SK-N-SH (cell line): ENCODE measurements at regions of chr2 and their contacts with region 1.

Region 1: DNA sequence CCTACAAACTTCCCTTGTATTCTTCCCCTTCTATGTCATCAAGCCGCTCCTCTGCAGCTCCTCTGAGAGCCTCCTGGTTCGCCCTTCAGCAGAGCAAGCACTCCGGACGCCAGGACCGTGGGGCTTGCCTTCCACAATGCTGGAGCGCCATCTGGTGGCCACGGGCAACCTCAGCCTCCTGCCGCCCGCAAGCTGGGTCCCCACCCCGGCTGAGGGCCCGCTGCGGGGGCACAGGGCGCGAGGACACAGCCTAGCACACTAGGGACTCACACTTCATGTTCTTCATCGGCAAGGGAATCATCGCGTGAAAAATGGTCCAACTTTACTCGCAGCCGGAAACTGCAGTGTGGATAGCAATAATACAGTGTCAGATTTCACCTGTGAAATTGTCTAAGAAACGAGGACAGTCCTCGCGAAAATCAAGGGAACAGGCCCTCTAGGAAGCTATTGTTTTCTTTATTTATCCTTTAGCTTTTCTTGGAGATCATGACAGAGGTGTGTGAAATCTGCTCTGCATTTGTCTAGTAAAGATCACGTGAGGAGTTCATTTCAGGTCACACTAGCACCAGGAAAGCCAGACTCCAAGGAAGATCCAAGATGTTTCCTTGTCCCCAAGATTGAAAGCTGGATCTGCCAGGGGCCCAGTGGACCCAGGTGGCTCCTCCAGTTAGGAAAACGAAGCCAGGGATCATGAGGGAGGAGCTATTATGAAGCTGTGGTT is 5.8 kb downstream of the PRLH start:
- DNase-seq: peak; percentile 96
- H3K4me3 ChIP-seq: peak overlapping the region in 1 of 2 experiments; percentile 17; a peak in 1 of 4 replicates
- H3K27ac ChIP-seq: peak overlapping the region in 1 of 2 experiments; percentile 21; a peak in 2 of 4 replicates
- H3K4me1 ChIP-seq: peaks cover 6 to 16% of the 10 kb centered on the region in 2 experiments; a peak in 3 of 4 replicates
- H3K27me3 ChIP-seq: no peaks in the 10 kb centered on the region
- CTCF ChIP-seq: peak; percentile 98
- EP300 ChIP-seq: no peak
- RAD21 ChIP-seq: peak; percentile 98

Region 2: DNA sequence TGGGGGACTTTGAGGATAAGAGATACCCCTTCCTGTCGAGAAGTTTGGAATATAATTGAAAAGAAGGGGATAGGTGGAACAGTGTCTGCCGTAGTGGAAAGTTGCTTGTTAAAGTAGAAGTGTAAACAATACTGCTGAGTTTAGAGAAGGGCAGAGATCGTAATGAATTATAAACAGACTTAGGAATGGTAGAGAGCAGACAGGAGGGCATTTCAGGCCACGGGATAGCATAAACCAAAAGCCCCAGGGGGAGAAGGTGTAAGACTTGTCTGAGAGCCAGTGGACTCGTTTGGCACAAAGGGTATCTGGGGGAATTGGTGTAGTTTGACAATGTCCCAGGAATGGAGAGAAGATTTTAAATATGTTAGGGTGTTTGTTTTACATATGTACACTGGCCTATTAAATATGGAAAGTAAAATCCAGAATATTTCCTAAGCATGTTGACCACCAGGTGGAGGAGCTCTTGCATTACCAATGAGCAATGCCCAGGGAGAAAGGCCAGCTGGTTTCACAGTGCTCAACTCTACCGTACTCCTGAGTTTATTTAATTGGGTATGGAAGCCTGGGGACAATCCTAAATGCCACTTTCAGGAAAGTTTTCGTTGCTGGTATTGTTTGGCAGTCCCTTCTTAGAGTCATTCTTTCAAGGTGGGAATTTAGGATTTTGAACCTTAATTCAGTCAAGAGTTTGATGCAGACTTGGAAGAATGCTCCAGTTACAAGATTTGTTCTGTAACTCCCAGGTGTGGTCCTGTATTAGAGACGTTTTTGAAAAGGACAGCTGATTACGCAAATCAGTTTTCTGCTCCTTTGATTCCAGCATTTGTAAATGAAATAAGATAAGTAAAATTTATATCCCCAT is 479.0 kb before region 1 on chr2:
- CTCF ChIA-PET with region 1: interaction called, 10 read pairs
- POLR2A ChIA-PET with region 1: no interaction called
- DNase-seq: peak; percentile 47
- H3K4me3 ChIP-seq: no peak overlapping the region
- H3K27ac ChIP-seq: peak overlapping the region in 1 of 2 experiments; percentile 45; a peak in 3 of 4 replicates
- H3K4me1 ChIP-seq: peaks cover 0 to 14% of the 10 kb centered on the region in 2 experiments; a peak in 2 of 4 replicates
- H3K27me3 ChIP-seq: no peaks in the 10 kb centered on the region
- CTCF ChIP-seq: peak; percentile 80
- EP300 ChIP-seq: no peak
- RAD21 ChIP-seq: peak; percentile 81

Region 3: DNA sequence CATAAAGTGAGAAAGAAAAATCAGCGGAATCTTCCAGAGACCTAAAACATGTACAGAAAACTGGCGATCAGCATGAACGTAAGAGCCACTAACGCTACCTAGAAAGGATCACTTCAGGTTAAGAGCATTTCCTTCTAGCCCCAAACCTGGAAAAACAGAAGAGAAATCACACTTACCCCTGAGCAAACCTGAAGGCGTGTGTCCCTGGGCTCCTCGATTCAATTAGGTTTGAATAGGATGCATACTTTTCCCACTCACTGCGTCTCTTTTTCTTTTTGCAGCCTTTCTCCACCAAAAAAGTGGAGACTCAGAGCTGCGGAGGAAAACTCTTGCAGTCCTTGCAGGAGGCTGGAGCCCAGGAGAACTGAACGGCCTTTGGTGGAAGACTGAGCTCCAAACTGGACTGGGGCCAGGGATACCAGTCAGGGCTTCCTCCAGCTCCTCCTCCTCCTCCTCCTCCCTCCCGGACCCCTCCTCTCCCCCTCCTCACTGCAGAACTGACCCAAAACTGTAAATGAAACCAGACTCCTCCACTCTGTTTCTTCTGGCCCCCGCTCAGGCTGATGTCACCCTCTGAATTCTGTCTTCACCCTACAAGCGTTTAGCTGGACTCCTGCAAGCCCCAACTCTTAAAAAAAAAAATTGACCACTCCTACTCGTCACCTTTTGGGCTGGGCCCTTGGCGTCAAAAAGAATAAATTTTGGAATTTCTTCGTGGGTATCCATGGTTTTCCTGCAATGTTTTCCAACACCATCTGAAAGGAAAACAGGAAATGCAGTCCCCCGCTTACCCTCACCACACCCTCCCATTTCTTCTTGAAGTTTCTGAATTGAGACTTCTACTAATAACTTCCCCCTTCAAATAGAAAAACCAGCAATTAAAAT is 158.2 kb before region 1 on chr2 and contains the start of gene COL6A3:
- CTCF ChIA-PET with region 1: interaction called, 24 read pairs
- POLR2A ChIA-PET with region 1: no interaction called
- DNase-seq: no peak
- H3K4me3 ChIP-seq: peak within 1 kb of the TSS in 1 of 2 experiments; percentile 39; a peak in 1 of 4 replicates
- H3K27ac ChIP-seq: peak within 1 kb of the TSS in 1 of 2 experiments; percentile 6; a peak in 2 of 4 replicates
- H3K4me1 ChIP-seq: peaks cover 0 to 5% of the 10 kb centered on the region in 2 experiments; a peak in 1 of 4 replicates
- H3K27me3 ChIP-seq: no peaks in the 10 kb centered on the region
- CTCF ChIP-seq: no peak
- EP300 ChIP-seq: no peak
- RAD21 ChIP-seq: no peak
- polyA plus RNA-seq, gene COL6A3: 10.7 and 18.5 TPM in 2 replicates

Region 4: GRCh38 chr2:237483040-237483721 is 89.0 kb before region 1 on chr2:
- CTCF ChIA-PET with region 1: interaction called, 16 read pairs
- POLR2A ChIA-PET with region 1: no interaction called
- DNase-seq: no peak
- H3K4me3 ChIP-seq: no peak overlapping the region
- H3K27ac ChIP-seq: peak overlapping the region; percentile 56 to 87
- H3K4me1 ChIP-seq: peaks cover 14 to 29% of the 10 kb centered on the region in 2 experiments; a peak in 3 of 4 replicates
- H3K27me3 ChIP-seq: no peaks in the 10 kb centered on the region
- CTCF ChIP-seq: peak; percentile 54
- EP300 ChIP-seq: no peak
- RAD21 ChIP-seq: no peak

Region 5: DNA sequence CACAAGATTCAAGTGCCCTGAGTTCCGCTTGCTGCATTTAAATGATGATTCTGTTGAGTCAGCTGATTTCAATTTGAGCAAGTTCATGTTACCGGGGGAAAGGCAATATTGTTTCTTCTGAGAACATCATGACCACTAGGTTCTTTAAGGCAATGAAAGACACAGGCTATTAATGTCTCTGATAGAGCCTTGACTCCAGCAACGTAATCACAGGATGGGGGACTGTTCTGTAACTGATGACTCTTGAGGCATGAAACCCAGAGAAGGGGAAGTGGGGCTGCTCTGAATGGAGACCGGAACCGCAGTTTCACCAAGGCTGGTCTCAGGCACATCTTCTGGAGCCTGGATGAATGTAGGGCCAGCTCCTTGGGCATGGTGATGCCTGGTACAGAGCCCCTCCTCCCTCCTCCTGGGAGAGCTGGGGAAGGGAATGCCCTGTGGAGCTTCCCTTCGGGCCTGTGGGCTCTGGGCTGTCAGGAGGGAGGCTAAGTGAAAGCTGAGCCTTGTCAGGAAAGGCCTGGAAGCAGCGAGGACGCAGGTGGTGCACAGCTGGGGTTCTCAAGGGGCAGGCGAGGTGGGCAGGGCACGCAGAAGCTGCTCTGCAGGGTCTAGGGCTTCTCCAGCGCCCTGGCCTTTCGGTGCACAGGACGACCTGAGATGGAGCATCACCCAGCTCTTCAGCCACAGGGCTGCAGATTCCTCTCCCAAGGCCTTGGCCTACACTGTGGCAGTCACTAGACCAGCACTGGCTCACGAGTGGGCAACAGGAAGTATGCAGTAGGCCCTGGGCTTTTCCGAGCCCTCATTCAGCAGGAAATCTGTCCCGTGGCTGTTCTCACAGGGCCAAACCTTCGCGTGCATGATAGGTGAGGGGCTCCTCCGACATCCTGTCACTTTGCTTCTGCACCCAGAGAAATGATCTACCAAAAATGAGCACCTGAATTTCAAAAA is 42.5 kb before region 1 on chr2:
- CTCF ChIA-PET with region 1: interaction called, 26 read pairs
- POLR2A ChIA-PET with region 1: no interaction called
- DNase-seq: no peak
- H3K4me3 ChIP-seq: no peak overlapping the region
- H3K27ac ChIP-seq: no peak overlapping the region
- H3K4me1 ChIP-seq: peaks cover 0 to 8% of the 10 kb centered on the region in 2 experiments; a peak in 1 of 4 replicates
- H3K27me3 ChIP-seq: no peaks in the 10 kb centered on the region
- CTCF ChIP-seq: no peak
- EP300 ChIP-seq: no peak
- RAD21 ChIP-seq: no peak

Region 6: GRCh38 chr2:237594514-237594871 is 22.3 kb after region 1 on chr2:
- CTCF ChIA-PET with region 1: interaction called, 14 read pairs
- POLR2A ChIA-PET with region 1: no interaction called
- DNase-seq: no peak
- H3K4me3 ChIP-seq: no peak overlapping the region
- H3K27ac ChIP-seq: no peak overlapping the region
- H3K4me1 ChIP-seq: peaks cover 0 to 8% of the 10 kb centered on the region in 2 experiments; a peak in 1 of 4 replicates
- H3K27me3 ChIP-seq: no peaks in the 10 kb centered on the region
- CTCF ChIP-seq: no peak
- EP300 ChIP-seq: no peak
- RAD21 ChIP-seq: no peak